GM23248 (cell line): ENCODE measurements at regions of chr2 and their contacts with region 1.

Region 1: GRCh38 chr2:85288244-85288725 is 39.5 kb downstream of the TGOLN2 start:
- DNase-seq: peak; percentile 77
- H3K4me3 ChIP-seq: no peak overlapping the region
- H3K27ac ChIP-seq: no peak overlapping the region
- H3K4me1 ChIP-seq: peaks cover 10% of the 10 kb centered on the region
- H3K27me3 ChIP-seq: no peaks in the 10 kb centered on the region

Region 2: DNA sequence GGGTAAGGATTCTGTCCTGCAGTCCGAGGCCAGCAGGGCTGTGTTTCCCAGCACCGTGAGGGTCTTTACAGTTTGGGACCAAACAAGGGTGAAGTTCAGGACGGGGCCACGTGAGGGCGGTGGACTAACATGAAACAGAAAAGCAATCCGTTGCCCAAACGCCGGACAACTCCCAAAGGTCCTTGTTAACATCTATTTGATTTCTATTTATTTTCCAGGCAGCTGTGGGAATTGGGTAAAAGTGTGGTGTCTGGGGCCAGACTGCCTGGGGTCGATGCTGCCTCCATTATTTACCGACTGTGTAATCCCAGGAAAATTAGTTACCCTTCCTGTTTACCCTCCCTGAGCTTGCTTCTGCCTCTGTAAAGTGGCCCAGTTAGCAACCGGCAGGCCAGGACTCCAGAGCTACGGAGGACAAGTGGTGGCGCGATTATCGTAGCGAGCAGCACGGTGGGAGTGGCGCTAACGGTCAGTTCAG is 221.4 kb before region 1 on chr2:
- in situ Hi-C with region 1: loop called (anchors 5 kb)
- DNase-seq: peak; percentile 87
- H3K4me3 ChIP-seq: peak overlapping the region; percentile 49
- H3K27ac ChIP-seq: no peak overlapping the region
- H3K4me1 ChIP-seq: no peaks in the 10 kb centered on the region
- H3K27me3 ChIP-seq: no peaks in the 10 kb centered on the region

Region 3: DNA sequence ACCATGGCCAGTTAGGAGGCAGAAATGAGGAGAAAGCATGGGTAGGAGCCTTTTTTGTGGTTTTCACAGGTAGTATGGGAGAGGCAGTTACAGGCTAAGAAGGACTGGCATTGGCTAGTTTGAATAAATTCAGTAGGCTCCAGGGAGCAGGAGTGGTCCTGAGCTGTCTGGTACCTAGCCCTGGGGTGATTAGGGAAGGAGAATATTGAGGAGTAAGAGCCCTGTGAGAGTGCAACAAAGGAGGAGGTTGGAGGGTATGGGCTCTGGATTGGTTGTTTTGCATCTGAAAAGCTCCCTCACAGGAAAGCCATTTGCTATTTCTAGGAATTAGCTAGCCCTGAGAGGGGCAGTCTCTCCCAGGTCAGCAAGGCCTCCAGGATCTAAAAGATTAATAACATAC is 168.4 kb before region 1 on chr2:
- in situ Hi-C with region 1: loop called (anchors 10 kb)
- DNase-seq: no peak
- H3K4me3 ChIP-seq: no peak overlapping the region
- H3K27ac ChIP-seq: no peak overlapping the region
- H3K4me1 ChIP-seq: no peaks in the 10 kb centered on the region
- H3K27me3 ChIP-seq: peaks cover 6% of the 10 kb centered on the region; the same call in 1 of the 2 replicates

Region 4: DNA sequence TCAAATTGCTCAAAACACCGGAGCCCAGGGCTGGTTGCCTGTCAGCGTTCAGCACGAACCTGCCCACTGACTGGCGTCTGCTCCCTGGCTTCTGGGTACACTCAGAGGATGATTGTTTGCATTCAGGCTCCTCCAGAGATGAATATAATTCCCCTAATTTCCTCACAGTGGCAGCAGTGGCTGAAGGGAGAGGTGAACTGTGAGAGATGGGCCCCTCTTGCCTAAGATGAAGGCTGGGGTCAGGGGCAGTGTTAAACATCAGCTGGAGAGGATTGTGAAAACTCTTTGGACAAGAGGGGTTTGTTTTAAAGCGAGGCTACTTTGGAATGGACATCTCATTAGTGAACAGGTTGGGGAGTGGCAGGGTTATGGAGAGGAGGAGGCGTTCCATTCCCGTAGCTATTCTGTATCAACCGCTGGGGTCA is 124.1 kb before region 1 on chr2:
- in situ Hi-C with region 1: no loop called
- DNase-seq: no peak
- H3K4me3 ChIP-seq: no peak overlapping the region
- H3K27ac ChIP-seq: no peak overlapping the region
- H3K4me1 ChIP-seq: peaks cover 21% of the 10 kb centered on the region
- H3K27me3 ChIP-seq: no peaks in the 10 kb centered on the region

Region 5: GRCh38 chr2:85750587-85751575 is 462.6 kb after region 1 on chr2:
- in situ Hi-C with region 1: no loop called
- DNase-seq: peak; percentile 76
- H3K4me3 ChIP-seq: no peak overlapping the region
- H3K27ac ChIP-seq: peak overlapping the region; percentile 16; the same call in 1 of the 2 replicates
- H3K4me1 ChIP-seq: peaks cover 36% of the 10 kb centered on the region
- H3K27me3 ChIP-seq: no peaks in the 10 kb centered on the region